CD8-positive, alpha-beta T cell (primary cell): ENCODE measurements at regions of chr12 and their contacts with region 1.

Region 1: GRCh38 chr12:132908145-132909044 is 21.0 kb upstream of the CHFR start:
- DNase-seq: peak; percentile 88 to 98 (median 96)
- ATAC-seq: peak; percentile 92
- H3K4me3 ChIP-seq: peak overlapping the region; percentile 58 to 77
- H3K4me3 Mint-ChIP-seq: peak overlapping the region; percentile 96
- H3K27ac ChIP-seq: peak overlapping the region; percentile 86 to 93
- H3K27ac Mint-ChIP-seq: peak overlapping the region; percentile 97
- H3K4me1 ChIP-seq: peaks cover 6% of the 10 kb centered on the region
- H3K4me1 Mint-ChIP-seq: peaks cover 23% of the 10 kb centered on the region
- H3K27me3 ChIP-seq: peaks cover 0 to 2% of the 10 kb centered on the region in 2 experiments
- H3K27me3 Mint-ChIP-seq: no peaks in the 10 kb centered on the region
- CTCF ChIP-seq: no peak

Region 2: DNA sequence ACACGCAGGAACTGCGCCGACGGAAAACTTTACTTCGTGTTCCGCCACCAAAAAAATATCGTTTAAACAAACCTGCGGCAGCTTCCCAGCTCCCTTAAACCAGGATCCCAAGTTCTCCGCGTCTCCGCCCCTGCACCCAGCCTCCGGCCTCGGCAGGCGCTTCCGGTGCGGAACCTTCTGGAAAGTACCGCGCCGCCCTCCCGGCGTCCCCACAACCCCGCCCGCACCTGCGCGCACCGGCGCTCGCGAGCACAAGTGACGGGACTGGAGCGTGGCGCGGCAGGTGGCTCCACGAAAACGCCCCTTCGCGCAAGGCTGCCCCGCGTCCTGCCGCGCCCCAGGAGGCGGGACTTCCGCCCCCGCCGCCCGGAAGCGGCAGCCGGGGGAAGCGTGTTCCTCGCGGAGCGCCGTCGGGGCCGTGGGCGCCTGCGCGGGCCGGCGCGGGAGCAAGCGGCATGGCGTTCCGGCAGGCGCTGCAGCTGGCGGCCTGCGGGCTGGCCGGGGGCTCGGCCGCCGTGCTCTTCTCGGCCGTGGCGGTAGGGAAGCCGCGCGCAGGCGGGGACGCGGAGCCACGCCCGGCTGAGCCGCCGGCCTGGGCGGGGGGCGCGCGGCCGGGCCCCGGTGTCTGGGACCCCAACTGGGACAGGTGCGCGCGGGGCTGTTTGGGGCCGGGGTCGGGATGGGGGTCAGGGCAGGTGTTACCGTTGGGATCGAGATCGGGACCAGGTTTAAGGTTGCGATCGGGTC is 197.8 kb before region 1 on chr12 and contains the start of gene PGAM5:
- CTCF ChIA-PET with region 1: no interaction called
- POLR2A ChIA-PET with region 1: no interaction called
- intact Hi-C with region 1: loop called (anchors 1 to 2 kb)
- DNase-seq: peak; percentile 81 to 98 (median 90)
- ATAC-seq: peak; percentile 97
- H3K4me3 ChIP-seq: peak within 1 kb of the TSS; percentile 68 to 69
- H3K4me3 Mint-ChIP-seq: peak within 1 kb of the TSS; percentile 87
- H3K27ac ChIP-seq: peak within 1 kb of the TSS; percentile 75 to 86
- H3K27ac Mint-ChIP-seq: peak within 1 kb of the TSS; percentile 94
- H3K4me1 ChIP-seq: peaks cover 21% of the 10 kb centered on the region
- H3K4me1 Mint-ChIP-seq: peaks cover 21% of the 10 kb centered on the region
- H3K27me3 ChIP-seq: no peaks in the 10 kb centered on the region
- H3K27me3 Mint-ChIP-seq: no peaks in the 10 kb centered on the region
- CTCF ChIP-seq: no peak
- total RNA-seq, gene PGAM5: 14.7 to 15.7 TPM

Region 3: GRCh38 chr12:132812631-132813305 is 95.6 kb before region 1 on chr12:
- CTCF ChIA-PET with region 1: interaction called, 6 read pairs
- POLR2A ChIA-PET with region 1: no interaction called
- intact Hi-C with region 1: loop called (anchors 2 kb)
- DNase-seq: peak in 4 of 9 experiments; percentile 35 to 61 (median 48)
- ATAC-seq: peak; percentile 56
- H3K4me3 ChIP-seq: no peak overlapping the region
- H3K4me3 Mint-ChIP-seq: no peak overlapping the region
- H3K27ac ChIP-seq: no peak overlapping the region
- H3K27ac Mint-ChIP-seq: peak overlapping the region; percentile 70
- H3K4me1 ChIP-seq: no peaks in the 10 kb centered on the region
- H3K4me1 Mint-ChIP-seq: peaks cover 15% of the 10 kb centered on the region
- H3K27me3 ChIP-seq: no peaks in the 10 kb centered on the region
- H3K27me3 Mint-ChIP-seq: no peaks in the 10 kb centered on the region
- CTCF ChIP-seq: no peak

Region 4: DNA sequence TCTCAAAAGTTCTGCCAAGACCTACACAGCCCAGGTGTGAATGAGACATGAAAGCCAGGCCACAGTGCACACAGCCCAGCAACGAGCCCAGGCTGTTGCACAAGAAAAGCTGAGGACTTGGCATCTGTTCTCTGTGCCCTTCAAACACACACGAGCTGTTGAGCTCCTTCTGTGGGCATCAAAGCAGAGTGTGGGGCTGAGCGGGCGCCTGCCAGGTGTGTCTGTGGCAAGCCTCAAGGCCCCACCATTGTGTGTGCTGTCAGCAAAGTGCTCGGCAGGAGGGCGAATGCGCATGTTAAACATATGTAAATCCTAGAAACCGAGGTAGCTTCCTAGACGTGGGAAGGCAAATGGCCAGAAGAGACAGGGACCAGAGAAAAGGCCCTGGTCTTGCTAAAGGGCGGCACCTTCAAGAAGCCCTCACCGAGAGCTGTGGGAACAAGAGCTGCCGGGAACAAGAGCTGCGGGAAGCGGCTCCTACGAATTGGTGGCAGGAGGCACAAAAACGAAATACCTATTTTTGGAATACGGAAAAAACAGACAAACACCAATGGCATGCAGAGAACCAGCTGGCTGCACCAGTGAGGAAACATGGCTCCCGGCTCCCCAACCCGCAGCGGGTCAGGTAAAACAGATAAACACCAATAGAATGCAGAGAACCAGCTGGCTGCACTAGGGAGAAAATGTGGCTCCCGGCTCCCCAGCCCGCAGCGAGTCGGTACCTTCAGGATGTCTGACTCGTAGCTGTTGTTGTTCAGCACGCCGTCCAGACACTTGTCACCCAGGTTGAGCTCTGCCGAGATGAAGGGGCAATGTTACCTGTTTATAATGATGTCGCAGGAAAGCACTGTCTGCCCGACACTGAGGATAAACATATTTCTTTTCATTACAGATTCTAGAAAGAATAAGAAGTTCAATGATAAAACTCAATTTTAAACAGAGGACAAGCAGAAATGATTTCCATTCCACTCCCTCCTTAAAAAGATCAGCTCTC is 60.7 kb before region 1 on chr12:
- CTCF ChIA-PET with region 1: interaction called, 10 read pairs
- POLR2A ChIA-PET with region 1: interaction called, 3 read pairs
- intact Hi-C with region 1: no loop called
- DNase-seq: peak; percentile 13 to 76 (median 52)
- ATAC-seq: peak; percentile 90
- H3K4me3 ChIP-seq: no peak overlapping the region
- H3K4me3 Mint-ChIP-seq: peak overlapping the region; percentile 67
- H3K27ac ChIP-seq: peak overlapping the region in 1 of 2 experiments; percentile 13
- H3K27ac Mint-ChIP-seq: peak overlapping the region; percentile 95
- H3K4me1 ChIP-seq: peaks cover 24% of the 10 kb centered on the region
- H3K4me1 Mint-ChIP-seq: peaks cover 28% of the 10 kb centered on the region
- H3K27me3 ChIP-seq: no peaks in the 10 kb centered on the region
- H3K27me3 Mint-ChIP-seq: no peaks in the 10 kb centered on the region
- CTCF ChIP-seq: no peak

Region 5: GRCh38 chr12:132956011-132956788 is 47.8 kb after region 1 on chr12 and contains the start of gene ZNF605:
- CTCF ChIA-PET with region 1: interaction called, 3 read pairs
- POLR2A ChIA-PET with region 1: interaction called, 5 read pairs
- intact Hi-C with region 1: loop called (anchors 1 to 2 kb)
- DNase-seq: peak; percentile 70 to 95 (median 86)
- ATAC-seq: peak; percentile 93
- H3K4me3 ChIP-seq: peak within 1 kb of the TSS; percentile 94 to 100
- H3K4me3 Mint-ChIP-seq: peak within 1 kb of the TSS; percentile 96
- H3K27ac ChIP-seq: peak within 1 kb of the TSS; percentile 78 to 86
- H3K27ac Mint-ChIP-seq: peak within 1 kb of the TSS; percentile 91
- H3K4me1 ChIP-seq: peaks cover 22% of the 10 kb centered on the region
- H3K4me1 Mint-ChIP-seq: peaks cover 32% of the 10 kb centered on the region
- H3K27me3 ChIP-seq: no peaks in the 10 kb centered on the region
- H3K27me3 Mint-ChIP-seq: no peaks in the 10 kb centered on the region
- CTCF ChIP-seq: no peak
- total RNA-seq, gene ZNF605: 5.0 TPM

Region 6: DNA sequence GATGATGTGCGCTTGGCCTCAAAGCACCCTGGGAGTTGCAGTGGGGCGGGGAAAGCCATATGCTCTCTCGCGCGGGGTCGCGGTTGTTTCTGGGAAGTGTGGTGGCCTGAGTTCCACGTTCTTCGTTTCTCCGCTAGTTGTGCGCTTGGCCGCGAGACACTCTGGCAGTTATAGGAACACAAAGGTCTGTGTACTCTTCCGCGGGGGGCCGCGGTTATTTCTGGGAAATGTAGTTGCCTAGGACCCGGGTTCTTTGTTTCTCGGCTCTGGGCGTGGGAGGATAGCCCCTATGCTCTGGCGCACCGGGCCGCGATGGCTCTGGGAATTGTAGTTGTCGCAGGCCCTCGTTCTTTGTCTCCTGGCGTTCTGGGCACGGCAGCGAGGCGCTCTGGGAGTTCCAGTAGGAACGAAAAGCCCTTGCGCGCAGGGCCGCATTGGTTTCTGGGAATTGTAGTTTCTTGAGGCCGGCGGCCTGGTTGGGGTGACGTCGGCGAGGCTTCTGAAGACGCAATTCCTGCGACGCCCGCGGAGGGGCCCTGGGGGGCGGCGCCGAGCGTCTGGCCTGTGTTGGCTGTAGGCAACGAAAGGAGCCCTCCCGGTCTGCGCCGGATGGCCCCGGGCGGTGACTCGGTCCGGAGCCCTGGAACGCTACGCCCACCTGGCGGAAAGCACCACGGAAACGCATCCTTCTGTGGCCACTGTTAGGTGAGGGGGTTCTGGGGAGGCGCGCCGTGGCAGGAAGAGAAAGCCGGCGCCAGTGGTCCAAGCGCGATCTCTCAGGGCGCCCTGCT is 172.2 kb after region 1 on chr12 and contains the start of gene ZNF140:
- CTCF ChIA-PET with region 1: no interaction called
- POLR2A ChIA-PET with region 1: interaction called, 8 read pairs
- intact Hi-C with region 1: loop called (anchors 1 kb)
- DNase-seq: peak; percentile 87 to 98 (median 94)
- ATAC-seq: peak; percentile 57
- H3K4me3 ChIP-seq: peak within 1 kb of the TSS; percentile 87 to 92
- H3K4me3 Mint-ChIP-seq: no peak within 1 kb of the TSS
- H3K27ac ChIP-seq: peak within 1 kb of the TSS; percentile 98 to 99
- H3K27ac Mint-ChIP-seq: no peak within 1 kb of the TSS
- H3K4me1 ChIP-seq: peaks cover 15% of the 10 kb centered on the region
- H3K4me1 Mint-ChIP-seq: peaks cover 17% of the 10 kb centered on the region
- H3K27me3 ChIP-seq: no peaks in the 10 kb centered on the region
- H3K27me3 Mint-ChIP-seq: no peaks in the 10 kb centered on the region
- CTCF ChIP-seq: peak; percentile 33
- total RNA-seq, gene ZNF140: 9.1 to 9.4 TPM

Region 7: DNA sequence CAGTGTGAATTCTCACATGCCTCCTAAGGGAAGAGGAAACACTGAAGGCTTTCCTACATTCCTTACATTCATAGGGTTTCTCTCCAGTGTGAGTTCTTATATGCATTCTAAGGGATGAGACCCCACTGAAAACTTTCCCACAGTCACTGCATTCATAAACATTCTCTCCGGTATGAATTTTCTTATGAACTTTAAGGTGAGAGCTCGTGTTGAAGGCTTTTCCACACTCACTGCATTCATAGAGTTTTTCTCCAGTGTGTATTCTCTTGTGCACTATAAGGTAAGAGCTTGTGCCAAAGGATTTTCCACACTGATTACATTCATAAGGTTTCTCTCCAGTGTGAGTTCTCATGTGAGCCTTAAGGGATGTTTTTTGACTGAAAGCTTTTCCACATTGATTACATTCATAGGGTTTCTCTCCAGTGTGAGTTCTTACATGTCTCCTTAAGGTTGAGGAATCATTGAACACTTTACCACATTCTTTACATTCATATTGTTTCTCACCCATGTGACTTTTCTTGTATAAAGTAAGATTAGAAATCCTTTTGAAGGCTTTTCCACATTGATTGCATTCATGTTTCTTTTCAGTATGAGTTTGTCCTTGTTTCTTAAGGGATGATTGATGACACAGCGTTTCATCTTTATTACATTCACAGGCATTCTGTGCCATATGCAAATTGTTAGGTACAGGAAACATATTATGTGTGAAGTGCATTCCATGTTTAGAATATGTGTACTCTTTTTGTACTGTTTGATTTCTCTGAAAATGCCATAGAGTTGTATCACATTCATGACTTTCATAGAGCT is 212.2 kb after region 1 on chr12:
- CTCF ChIA-PET with region 1: no interaction called
- POLR2A ChIA-PET with region 1: no interaction called
- intact Hi-C with region 1: no loop called
- DNase-seq: no peak
- ATAC-seq: no peak
- H3K4me3 ChIP-seq: peak overlapping the region in 1 of 2 experiments; percentile 12
- H3K4me3 Mint-ChIP-seq: no peak overlapping the region
- H3K27ac ChIP-seq: no peak overlapping the region
- H3K27ac Mint-ChIP-seq: no peak overlapping the region
- H3K4me1 ChIP-seq: no peaks in the 10 kb centered on the region
- H3K4me1 Mint-ChIP-seq: peaks cover 2% of the 10 kb centered on the region
- H3K27me3 ChIP-seq: no peaks in the 10 kb centered on the region
- H3K27me3 Mint-ChIP-seq: no peaks in the 10 kb centered on the region
- CTCF ChIP-seq: no peak